Activated CD4-positive, alpha-beta memory T cell treated with anti-CD3 and anti-CD28 coated beads for 36 hours (primary cell): ENCODE measurements at regions of chr4 and their contacts with region 1.

Region 1: DNA sequence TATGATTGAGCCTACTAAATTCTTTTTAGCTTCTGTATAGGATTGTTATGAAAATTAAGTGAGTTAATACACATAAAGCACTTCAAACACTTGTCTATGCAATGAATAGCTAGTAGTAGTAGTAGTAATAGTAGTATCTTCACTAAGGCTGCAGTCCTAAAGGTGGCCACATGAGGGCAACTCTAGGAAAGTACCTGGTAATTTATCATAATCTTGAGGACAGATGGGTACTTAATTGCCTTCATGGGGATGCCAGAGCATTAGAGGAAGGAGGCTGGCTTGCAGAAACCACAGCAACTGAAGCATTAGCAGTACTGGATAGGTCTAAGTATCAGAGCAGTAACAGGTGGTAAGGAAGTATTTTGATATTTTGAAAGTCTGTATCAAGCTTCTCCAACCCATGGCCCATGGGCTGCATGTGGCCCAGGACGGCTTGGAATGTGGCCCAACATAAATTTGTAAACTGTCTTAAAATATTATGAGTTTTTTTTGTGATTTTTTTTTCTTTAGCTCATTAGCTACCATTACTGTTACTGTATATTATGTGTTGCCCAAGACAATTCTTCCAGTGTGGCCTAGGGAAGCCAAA is 17.3 kb downstream of the NIPAL1 start:
- DNase-seq: peak; percentile 69
- H3K4me3 Mint-ChIP-seq: no peak overlapping the region
- H3K27ac Mint-ChIP-seq: no peak overlapping the region
- H3K4me1 Mint-ChIP-seq: peaks cover 37% of the 10 kb centered on the region
- H3K27me3 Mint-ChIP-seq: peaks cover 6% of the 10 kb centered on the region

Region 2: GRCh38 chr4:47836641-47837093 is 197.3 kb before region 1 on chr4:
- CTCF ChIA-PET with region 1: interaction called, 7 read pairs
- POLR2A ChIA-PET with region 1: interaction called, 4 read pairs
- intact Hi-C with region 1: loop called (anchors 5 kb)
- DNase-seq: peak; percentile 74
- H3K4me3 Mint-ChIP-seq: peak overlapping the region; percentile 76
- H3K27ac Mint-ChIP-seq: no peak overlapping the region
- H3K4me1 Mint-ChIP-seq: peaks cover 32% of the 10 kb centered on the region
- H3K27me3 Mint-ChIP-seq: peaks cover 3% of the 10 kb centered on the region

Region 3: GRCh38 chr4:48016141-48017103 is 17.5 kb before region 1 on chr4 and contains the starts of genes CNGA1 and NIPAL1:
- CTCF ChIA-PET with region 1: interaction called, 37 read pairs
- POLR2A ChIA-PET with region 1: interaction called, 8 read pairs
- intact Hi-C with region 1: loop called (anchors 1 kb)
- DNase-seq: peak; percentile 70
- H3K4me3 Mint-ChIP-seq: peak within 1 kb of the TSS; percentile 73
- H3K27ac Mint-ChIP-seq: no peak within 1 kb of the TSS
- H3K4me1 Mint-ChIP-seq: peaks cover 21% of the 10 kb centered on the region
- H3K27me3 Mint-ChIP-seq: peaks cover 25% of the 10 kb centered on the region
- total RNA-seq, gene CNGA1: 0.70 TPM in 1 of 2 experiments, not detected in the other
- total RNA-seq, gene NIPAL1: 1.3 to 1.9 TPM

Region 4: DNA sequence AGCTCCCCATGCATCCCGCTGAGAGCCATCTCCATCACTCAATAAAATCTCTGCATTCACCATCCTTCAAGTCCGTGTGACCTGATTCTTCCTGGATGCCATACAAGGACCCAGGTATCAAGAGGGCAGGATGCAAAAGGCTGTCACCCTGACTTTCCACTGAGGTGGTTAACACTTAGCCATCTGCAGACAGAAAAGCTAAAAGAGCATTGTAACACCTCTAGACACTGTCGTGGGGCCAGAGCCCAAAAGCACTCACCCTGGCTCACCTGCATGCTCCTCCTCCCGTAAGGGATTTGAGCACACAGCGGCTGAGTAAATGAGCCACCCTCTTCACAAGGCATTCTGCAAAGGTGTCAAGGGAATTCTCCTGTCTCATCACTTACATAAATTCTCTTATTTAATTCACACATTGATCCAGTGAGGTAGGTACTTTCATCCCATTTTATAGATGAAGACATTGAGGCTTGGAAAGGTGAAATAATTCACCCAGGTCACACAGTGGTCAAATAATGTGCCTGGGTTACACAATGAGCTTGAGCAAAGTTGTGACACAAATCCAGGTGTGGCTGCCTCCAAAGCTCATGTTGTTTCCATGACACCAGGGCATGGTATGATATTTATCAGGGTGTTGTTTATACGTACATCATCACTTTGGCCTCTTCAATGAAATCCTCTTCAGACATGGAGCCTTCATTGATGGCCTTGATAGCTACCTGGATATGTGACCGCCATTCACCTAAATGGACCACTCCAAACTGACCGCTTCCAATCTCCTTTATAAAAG is 52.1 kb after region 1 on chr4:
- CTCF ChIA-PET with region 1: interaction called, 84 read pairs
- POLR2A ChIA-PET with region 1: no interaction called
- intact Hi-C with region 1: loop called (anchors 1 kb)
- DNase-seq: no peak
- H3K4me3 Mint-ChIP-seq: no peak overlapping the region
- H3K27ac Mint-ChIP-seq: no peak overlapping the region
- H3K4me1 Mint-ChIP-seq: peaks cover 5% of the 10 kb centered on the region
- H3K27me3 Mint-ChIP-seq: no peaks in the 10 kb centered on the region

Region 5: GRCh38 chr4:48109413-48110263 is 75.7 kb after region 1 on chr4:
- CTCF ChIA-PET with region 1: interaction called, 33 read pairs
- POLR2A ChIA-PET with region 1: no interaction called
- intact Hi-C with region 1: no loop called
- DNase-seq: no peak
- H3K4me3 Mint-ChIP-seq: no peak overlapping the region
- H3K27ac Mint-ChIP-seq: no peak overlapping the region
- H3K4me1 Mint-ChIP-seq: peaks cover 47% of the 10 kb centered on the region
- H3K27me3 Mint-ChIP-seq: no peaks in the 10 kb centered on the region

Region 6: DNA sequence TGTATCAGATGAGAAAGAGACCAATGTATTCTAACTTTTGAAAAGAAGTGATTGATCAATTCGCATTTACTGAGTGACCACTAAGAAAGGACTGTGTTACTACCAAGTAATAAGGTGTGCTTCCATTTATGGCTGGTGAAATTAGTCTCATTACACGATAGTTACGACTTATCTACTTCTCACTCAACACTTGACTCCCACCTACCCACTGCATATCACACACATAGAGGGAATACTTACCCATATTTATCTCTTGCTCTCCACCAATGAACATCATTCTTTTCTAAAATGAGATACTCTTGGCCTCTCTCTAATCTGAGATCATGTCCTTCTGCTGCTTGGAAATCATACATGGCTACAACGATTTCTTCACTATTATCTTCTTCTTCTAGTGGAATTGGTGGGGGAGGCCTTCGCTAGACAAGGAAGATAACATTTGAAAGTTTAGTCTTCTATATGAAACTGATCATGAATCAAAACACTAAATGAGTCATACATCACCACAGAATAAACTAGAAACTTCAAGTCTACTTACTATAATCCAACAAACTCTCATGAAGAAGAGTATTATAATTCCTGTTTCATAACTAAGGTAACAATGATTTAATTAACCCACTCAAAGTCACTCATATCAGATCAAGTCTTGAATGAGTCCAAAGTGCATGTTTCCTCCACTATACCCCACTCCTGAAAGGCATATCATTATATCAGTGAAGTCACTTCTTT is 133.8 kb after region 1 on chr4:
- CTCF ChIA-PET with region 1: no interaction called
- POLR2A ChIA-PET with region 1: no interaction called
- intact Hi-C with region 1: loop called (anchors 1 kb)
- DNase-seq: no peak
- H3K4me3 Mint-ChIP-seq: no peak overlapping the region
- H3K27ac Mint-ChIP-seq: no peak overlapping the region
- H3K4me1 Mint-ChIP-seq: peaks cover 12% of the 10 kb centered on the region
- H3K27me3 Mint-ChIP-seq: no peaks in the 10 kb centered on the region